ENCODE measurements at regions of chr10 and their contacts with region 1.

Region 1: DNA sequence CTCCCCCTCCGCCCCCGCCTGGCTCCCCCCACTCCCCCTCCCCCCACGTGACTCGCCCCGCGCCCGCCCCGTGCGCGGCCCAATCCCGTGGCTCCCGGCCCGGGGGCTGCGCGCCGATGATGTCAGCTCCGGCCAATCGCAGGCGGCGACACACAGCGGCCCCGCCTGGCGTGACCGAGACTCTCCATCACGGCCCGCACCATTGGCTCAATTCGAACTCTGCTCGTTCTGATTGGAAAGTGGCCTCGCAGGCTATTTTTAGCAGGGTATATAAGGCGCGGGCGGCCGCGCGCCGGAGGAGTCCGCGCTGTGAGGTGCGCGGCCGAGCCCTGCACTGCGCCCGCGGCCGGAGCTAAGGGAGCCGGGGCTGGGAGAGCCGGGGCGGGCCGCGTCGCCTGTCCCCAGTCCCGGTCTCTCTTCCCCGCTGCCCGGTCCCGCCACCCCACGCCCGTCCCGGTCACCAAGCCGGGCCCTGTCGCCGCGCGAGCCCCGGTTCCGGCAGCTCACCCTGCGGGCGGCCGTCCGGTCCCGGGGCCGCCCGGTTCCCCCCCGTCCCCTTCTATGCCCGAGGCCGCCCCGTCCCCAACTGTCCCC is 345 bp upstream of the KLF6 start:
- DNase-seq: peak; percentile 99
- ATAC-seq: peak; percentile 70
- H3K4me3 Mint-ChIP-seq: peak overlapping the region; percentile 95
- H3K27ac Mint-ChIP-seq: peak overlapping the region; percentile 98
- H3K4me1 Mint-ChIP-seq: peaks cover 43% of the 10 kb centered on the region
- H3K27me3 Mint-ChIP-seq: no peaks in the 10 kb centered on the region

Region 2: GRCh38 chr10:3719024-3719843 is 66.1 kb before region 1 on chr10:
- CTCF ChIA-PET with region 1: no interaction called
- POLR2A ChIA-PET with region 1: no interaction called
- DNase-seq: no peak
- ATAC-seq: no peak
- H3K4me3 Mint-ChIP-seq: no peak overlapping the region
- H3K27ac Mint-ChIP-seq: no peak overlapping the region
- H3K4me1 Mint-ChIP-seq: no peaks in the 10 kb centered on the region
- H3K27me3 Mint-ChIP-seq: peaks cover 14% of the 10 kb centered on the region

Region 3: GRCh38 chr10:3757638-3758490 is 27.5 kb before region 1 on chr10:
- CTCF ChIA-PET with region 1: interaction called, 4 read pairs
- POLR2A ChIA-PET with region 1: interaction called, 154 read pairs
- DNase-seq: peak; percentile 72
- ATAC-seq: peak; percentile 90
- H3K4me3 Mint-ChIP-seq: peak overlapping the region; percentile 34
- H3K27ac Mint-ChIP-seq: peak overlapping the region; percentile 91
- H3K4me1 Mint-ChIP-seq: peaks cover 71% of the 10 kb centered on the region
- H3K27me3 Mint-ChIP-seq: no peaks in the 10 kb centered on the region

Region 4: DNA sequence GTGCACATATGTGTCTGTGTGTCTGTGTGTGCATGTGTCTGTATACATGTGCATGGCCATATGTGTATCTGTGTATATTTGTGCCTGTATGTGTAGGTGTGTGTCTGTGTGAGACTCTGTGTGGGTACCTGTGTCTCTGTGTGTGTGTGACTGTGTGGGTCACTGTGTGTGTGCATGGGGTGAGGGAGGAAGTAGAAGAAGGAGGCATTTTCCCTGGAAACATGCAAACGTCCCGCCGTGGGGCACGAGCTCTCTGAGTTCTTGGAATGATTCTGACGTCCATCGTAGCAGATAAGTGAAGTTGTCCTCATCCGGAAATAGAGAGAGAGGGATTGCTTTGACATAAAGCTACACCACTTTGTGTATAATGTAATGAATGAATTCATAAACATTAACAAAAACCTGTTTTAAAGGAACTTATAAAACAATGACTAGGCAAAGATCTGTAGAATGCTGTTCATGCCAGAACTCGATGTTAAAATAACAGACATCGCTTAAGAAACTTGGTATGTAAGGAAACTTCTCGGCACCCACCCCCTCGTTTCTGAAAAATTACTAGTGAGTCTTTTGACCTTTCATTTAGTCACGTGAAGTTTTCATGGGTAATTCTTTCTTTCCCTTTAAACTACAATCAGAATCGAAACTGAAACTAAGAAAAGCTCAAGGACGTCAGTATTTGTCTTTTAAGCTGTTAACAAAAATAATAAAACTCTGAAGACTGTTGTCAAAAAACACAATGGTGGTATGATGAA is 43.2 kb after region 1 on chr10:
- CTCF ChIA-PET with region 1: interaction called, 3 read pairs
- POLR2A ChIA-PET with region 1: interaction called, 58 read pairs
- DNase-seq: no peak
- ATAC-seq: peak; percentile 56
- H3K4me3 Mint-ChIP-seq: peak overlapping the region; percentile 59
- H3K27ac Mint-ChIP-seq: peak overlapping the region; percentile 91
- H3K4me1 Mint-ChIP-seq: peaks cover 45% of the 10 kb centered on the region
- H3K27me3 Mint-ChIP-seq: no peaks in the 10 kb centered on the region

Region 5: GRCh38 chr10:3887885-3888476 is 102.6 kb after region 1 on chr10:
- CTCF ChIA-PET with region 1: interaction called, 3 read pairs
- POLR2A ChIA-PET with region 1: interaction called, 67 read pairs
- DNase-seq: peak; percentile 34
- ATAC-seq: peak; percentile 42
- H3K4me3 Mint-ChIP-seq: no peak overlapping the region
- H3K27ac Mint-ChIP-seq: peak overlapping the region; percentile 9
- H3K4me1 Mint-ChIP-seq: peaks cover 29% of the 10 kb centered on the region
- H3K27me3 Mint-ChIP-seq: no peaks in the 10 kb centered on the region

Region 6: DNA sequence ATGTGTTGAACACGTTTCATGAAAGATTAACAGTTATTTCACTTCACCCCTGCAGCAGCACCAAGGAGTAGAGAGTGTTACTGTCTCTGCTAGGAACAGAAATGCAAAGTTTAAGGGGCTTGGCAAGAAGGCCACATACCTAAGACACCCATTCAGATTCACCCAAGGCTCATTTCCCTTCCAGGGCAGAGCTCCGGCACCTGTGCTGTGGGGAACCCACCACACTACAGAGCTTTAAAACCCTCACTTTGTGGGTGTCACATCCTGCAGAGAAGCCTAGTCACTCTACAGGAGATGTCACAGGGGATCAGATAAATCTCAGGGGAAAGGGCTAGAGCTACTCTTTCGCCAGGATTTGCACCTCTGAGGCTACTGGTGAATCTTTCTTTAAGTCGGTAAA is 175.7 kb after region 1 on chr10:
- CTCF ChIA-PET with region 1: interaction called, 4 read pairs
- POLR2A ChIA-PET with region 1: interaction called, 112 read pairs
- DNase-seq: peak; percentile 89
- ATAC-seq: peak; percentile 98
- H3K4me3 Mint-ChIP-seq: peak overlapping the region; percentile 87
- H3K27ac Mint-ChIP-seq: peak overlapping the region; percentile 96
- H3K4me1 Mint-ChIP-seq: peaks cover 86% of the 10 kb centered on the region
- H3K27me3 Mint-ChIP-seq: no peaks in the 10 kb centered on the region

Region 7: GRCh38 chr10:4131407-4132228 is 346.3 kb after region 1 on chr10:
- CTCF ChIA-PET with region 1: no interaction called
- POLR2A ChIA-PET with region 1: interaction called, 26 read pairs
- DNase-seq: peak; percentile 68
- ATAC-seq: peak; percentile 83
- H3K4me3 Mint-ChIP-seq: no peak overlapping the region
- H3K27ac Mint-ChIP-seq: no peak overlapping the region
- H3K4me1 Mint-ChIP-seq: peaks cover 39% of the 10 kb centered on the region
- H3K27me3 Mint-ChIP-seq: no peaks in the 10 kb centered on the region